ENCODE measurements at regions of chr14 and their contacts with region 1.

Region 1: DNA sequence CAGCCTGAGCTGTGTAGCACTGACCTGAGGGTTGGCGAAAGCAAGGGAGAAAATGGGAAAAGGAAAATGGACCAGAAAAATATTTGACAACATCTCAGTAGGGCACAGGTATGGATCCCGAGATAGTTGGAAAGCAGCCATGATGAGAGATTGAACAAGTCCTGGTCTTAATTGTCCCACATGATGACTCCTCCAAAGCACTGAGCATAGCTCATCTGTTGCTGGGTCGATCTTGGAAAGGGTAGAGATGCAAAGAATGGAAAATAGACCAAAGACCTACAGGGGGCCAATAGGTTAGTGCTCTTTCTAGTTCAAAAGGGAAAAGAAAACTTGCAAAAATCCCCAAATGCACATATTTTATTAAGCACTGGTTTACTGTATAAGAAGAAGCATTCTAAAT is 251.9 kb downstream of the SEC23A start:
- DNase-seq: no peak
- ATAC-seq: no peak
- H3K4me3 ChIP-seq: no peak overlapping the region
- H3K27ac ChIP-seq: no peak overlapping the region
- H3K4me1 ChIP-seq: peaks cover 0 to 4% (median 0%) of the 10 kb centered on the region in 9 donors
- H3K27me3 ChIP-seq: no peaks in the 10 kb centered on the region
- CTCF ChIP-seq: no peak

Region 2: DNA sequence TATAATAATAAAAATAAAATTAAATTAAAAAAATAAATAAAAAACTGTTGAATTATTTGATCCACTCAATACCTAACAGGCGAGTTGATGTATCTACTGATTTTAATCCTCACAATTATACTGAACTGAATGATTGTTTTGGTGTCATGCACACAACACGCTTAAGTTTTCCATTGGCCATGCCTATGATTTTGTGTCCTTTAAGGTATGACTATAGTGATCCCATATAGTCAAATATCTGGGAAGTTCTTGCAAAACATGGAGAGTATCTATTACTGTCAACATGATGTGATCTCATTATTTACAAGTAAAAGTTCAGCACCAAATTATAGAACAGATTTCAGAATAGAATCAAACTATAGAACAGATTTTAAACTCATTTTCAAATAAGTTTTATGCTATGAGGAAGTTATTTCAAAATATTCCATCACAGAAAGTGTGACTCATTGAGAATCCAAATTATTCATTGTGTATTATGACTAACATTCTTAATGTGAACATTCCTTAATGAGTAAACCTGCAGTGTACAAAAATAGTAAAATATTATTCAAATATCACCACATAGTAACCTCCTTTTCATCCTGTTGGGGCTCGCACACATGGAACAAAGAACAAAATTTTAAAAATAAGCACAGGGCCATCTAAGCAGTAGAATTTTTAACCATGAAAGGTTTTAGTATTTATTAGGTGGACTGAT is 1869.1 kb before region 1 on chr14:
- intact Hi-C with region 1: loop called in 1 of 10 experiments (anchors 10 kb)
- DNase-seq: no peak
- ATAC-seq: no peak
- H3K4me3 ChIP-seq: no peak overlapping the region
- H3K27ac ChIP-seq: no peak overlapping the region
- H3K4me1 ChIP-seq: no peaks in the 10 kb centered on the region
- H3K27me3 ChIP-seq: no peaks in the 10 kb centered on the region
- CTCF ChIP-seq: no peak

Region 3: DNA sequence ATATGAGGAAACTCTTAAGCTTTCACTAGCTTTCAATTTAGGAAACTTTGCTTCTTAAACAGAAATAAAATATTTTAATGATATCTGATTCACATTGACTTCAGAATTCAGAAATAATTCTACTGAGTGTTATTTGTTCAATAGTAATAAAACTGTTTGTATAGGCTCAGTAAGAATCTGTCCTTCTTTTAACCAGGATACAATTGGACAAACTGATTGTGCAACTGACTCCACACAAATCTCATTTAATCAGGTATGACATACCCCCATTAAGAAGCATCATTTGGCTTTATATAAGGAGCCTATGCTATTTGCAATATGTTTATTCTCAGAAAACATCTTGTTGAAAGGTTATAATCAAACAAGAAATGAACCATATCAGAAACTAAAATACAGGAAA is 934.8 kb before region 1 on chr14:
- intact Hi-C with region 1: loop called in 1 of 10 experiments (anchors 10 kb)
- DNase-seq: no peak
- ATAC-seq: no peak
- H3K4me3 ChIP-seq: no peak overlapping the region
- H3K27ac ChIP-seq: no peak overlapping the region
- H3K4me1 ChIP-seq: no peaks in the 10 kb centered on the region
- H3K27me3 ChIP-seq: no peaks in the 10 kb centered on the region
- CTCF ChIP-seq: no peak